ENCODE measurements at regions of chr11 and their contacts with region 1.

Region 1: DNA sequence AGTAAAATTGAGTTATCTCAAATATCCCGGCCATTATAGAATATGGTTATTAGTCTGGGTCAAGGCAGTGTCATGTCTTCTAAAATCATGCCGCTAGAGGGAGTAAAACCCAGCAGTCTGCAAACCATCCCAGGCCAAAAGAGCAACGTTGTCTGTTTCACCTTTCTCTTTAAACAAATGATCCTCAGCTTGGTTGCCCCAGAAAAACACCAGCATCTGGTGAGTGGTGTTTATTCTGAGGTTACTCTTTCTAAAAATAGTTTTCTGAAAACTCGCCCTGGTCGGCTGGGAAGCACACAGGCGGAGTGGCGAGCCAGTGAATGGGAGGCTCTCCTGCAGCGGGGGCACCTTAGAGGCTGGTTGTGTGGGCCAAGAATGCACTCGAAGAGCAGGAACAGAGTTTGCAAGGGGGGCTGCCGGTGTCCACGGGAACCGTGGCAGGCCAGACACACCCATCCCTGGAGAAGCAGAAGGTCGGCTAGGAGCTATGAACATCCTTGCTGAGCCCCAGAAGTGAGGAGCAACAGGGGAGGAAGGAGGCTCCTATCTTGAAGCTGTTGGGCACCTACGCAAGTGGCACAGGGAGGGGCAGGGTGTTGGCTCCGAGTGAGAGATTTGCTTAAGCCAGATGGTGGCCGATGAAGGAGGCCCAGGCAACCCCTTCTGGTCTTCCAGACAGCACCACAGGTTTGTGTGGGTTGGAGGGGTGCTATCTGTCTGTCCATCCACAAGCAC is 297.1 kb downstream of the ETS1 start:
- DNase-seq: peak; percentile 20 to 87 (median 76)
- ATAC-seq: peak; percentile 64 to 69
- H3K4me3 Mint-ChIP-seq: peak overlapping the region; percentile 86 to 95 (median 92)
- H3K27ac Mint-ChIP-seq: peak overlapping the region; percentile 98 to 100 (median 100)
- H3K4me1 Mint-ChIP-seq: peaks cover 41 to 97% (median 88%) of the 10 kb centered on the region in 4 donors
- H3K27me3 Mint-ChIP-seq: no peaks in the 10 kb centered on the region

Region 2: DNA sequence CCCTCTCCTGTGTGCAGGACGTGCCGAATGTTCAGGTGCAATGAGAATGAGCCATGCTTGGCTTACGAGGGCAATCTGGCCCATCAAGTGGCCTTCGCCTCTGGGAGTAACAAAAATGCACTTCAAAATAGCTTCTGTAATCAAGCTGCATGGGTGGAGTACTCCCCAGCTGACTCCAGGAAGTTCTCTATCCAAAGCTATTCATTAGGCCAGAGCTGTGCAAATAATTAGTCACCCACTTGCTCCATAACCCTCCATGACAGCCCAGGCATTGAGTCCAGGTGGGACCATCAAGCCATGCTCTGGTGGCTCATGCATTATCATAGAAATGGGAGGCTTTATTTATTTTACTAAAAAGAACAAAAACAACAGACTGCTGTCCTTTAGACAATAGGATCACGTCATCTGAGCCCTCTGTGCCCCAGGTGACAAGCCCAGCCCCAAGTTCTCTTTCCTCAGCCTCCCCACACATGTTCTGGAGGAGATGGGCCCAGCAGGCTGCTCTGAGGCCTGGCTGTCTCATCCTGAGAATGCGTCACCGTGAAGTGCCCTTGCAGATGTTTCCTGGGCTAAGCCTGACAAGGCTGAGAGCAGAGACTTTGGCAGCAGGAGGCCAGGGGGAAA is 52.4 kb after region 1 on chr11:
- POLR2A ChIA-PET with region 1: interaction called, 13 read pairs
- DNase-seq: peak in 5 of 10 donors; percentile 12 to 64 (median 32)
- ATAC-seq: peak; percentile 17 to 32
- H3K4me3 Mint-ChIP-seq: peak overlapping the region in 8 of 10 donors; percentile 74 to 90 (median 84)
- H3K27ac Mint-ChIP-seq: peak overlapping the region; percentile 97 to 100 (median 98)
- H3K4me1 Mint-ChIP-seq: peaks cover 31 to 89% (median 75%) of the 10 kb centered on the region in 4 donors
- H3K27me3 Mint-ChIP-seq: no peaks in the 10 kb centered on the region

Region 3: DNA sequence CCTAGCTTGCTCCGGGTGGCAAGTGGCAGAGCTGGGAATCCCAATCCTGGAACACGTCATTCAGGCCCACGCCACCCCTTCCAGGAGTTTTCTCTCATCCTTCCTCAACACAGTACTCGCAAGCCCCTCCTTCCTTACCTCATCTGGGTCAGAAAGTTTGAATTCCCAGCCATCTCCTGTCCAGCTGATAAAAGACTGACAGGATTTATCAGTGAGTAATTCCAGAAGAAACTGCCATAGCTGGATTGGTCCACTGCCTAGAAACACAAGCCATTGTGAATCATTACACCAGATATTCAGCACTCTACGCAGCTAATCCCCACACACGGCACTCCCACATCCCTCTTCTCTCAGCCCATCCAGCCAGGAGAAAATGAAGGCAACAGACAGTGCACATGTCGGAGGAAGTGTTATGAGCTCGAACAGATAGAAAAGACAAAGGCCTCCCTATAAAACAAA is 173.1 kb after region 1 on chr11:
- POLR2A ChIA-PET with region 1: interaction called, 252 read pairs
- DNase-seq: no peak
- ATAC-seq: no peak
- H3K4me3 Mint-ChIP-seq: peak overlapping the region; percentile 56 to 89 (median 86)
- H3K27ac Mint-ChIP-seq: peak overlapping the region; percentile 93 to 99 (median 98)
- H3K4me1 Mint-ChIP-seq: peaks cover 66 to 96% (median 94%) of the 10 kb centered on the region in 4 donors
- H3K27me3 Mint-ChIP-seq: no peaks in the 10 kb centered on the region

Region 4: DNA sequence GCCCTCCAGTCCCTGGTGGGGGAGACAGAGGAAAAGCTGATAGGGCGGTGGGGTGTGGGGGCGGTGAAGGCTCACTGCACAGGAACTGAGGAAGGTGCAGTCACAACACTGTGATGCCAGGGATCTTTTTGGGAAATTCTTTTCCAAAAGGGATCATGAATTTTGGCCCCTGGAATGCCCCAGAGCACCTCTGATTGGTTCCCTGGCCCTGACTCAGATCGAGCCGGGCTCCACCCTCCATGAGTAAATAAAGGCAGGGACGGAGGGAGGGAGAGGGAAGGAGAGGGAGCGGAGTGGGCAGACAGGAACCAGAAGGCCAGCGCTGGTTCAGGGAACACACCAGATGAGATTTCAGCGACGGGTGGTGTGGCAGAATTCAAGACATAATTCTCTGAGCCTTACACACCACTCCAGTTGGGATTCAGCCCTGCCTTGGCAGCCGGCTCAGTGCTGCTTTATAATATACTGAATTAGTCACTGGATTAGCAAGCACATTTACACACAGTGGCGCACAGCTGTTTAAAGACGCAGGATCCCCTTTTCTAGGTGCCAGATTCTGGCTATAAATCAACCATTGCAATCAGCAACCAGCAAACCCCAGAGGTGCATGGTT is 216.8 kb after region 1 on chr11:
- POLR2A ChIA-PET with region 1: interaction called, 43 read pairs
- DNase-seq: peak in 1 of 10 donors; percentile 64
- ATAC-seq: peak; percentile 5 to 11
- H3K4me3 Mint-ChIP-seq: peak overlapping the region; percentile 87 to 99 (median 98)
- H3K27ac Mint-ChIP-seq: peak overlapping the region; percentile 93 to 99 (median 96)
- H3K4me1 Mint-ChIP-seq: peaks cover 57 to 100% (median 96%) of the 10 kb centered on the region in 4 donors
- H3K27me3 Mint-ChIP-seq: no peaks in the 10 kb centered on the region

Region 5: DNA sequence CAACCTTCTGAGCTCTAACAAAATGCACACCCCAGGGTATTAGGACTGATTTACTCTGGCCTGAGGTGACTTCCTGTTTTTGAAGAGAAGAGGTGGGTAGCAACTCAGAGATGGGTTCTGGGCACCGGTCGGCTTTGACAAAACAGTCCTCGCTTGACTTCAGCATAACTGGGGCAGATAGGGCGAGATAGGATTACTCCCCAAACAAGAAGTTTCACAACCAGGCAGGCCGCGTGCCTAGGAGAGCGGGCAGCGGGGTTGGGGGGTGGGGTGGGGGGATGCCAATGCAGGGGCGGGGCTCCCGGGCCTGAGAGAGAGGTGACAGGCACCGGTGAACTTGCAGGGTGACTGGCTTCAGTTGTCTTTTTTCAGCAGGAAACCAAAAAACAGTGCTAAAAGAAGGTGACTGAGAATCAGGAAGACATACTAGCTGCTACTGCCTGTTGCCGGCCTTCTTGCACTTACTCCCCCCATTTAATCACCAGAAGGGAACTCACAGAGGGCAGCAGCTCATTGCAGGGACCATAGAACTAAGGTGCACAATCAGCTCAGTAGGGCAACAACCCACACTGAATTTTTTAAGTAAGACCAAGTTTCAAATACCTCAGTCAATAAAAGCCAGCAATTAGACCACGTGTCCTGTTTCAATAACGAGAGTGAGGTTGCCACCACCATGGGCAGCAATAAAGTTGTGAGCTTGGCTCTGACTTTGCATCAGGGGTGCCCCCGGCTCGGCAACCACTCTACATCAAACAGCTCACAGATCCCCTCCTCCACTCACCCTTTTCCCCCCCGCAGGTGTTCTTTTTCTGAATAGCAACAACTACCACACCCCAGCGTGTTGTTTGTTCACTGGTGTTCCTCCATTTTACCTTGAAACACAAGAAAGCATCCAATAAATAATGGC is 334.2 kb after region 1 on chr11:
- POLR2A ChIA-PET with region 1: interaction called, 40 read pairs
- DNase-seq: peak; percentile 32 to 86 (median 61)
- ATAC-seq: peak; percentile 58 to 67
- H3K4me3 Mint-ChIP-seq: peak overlapping the region; percentile 52 to 85 (median 82)
- H3K27ac Mint-ChIP-seq: peak overlapping the region; percentile 93 to 99 (median 98)
- H3K4me1 Mint-ChIP-seq: peaks cover 66 to 99% (median 98%) of the 10 kb centered on the region in 4 donors
- H3K27me3 Mint-ChIP-seq: no peaks in the 10 kb centered on the region